GM13977 (cell line): ENCODE measurements at regions of chr2 and their contacts with region 1.

Region 1: GRCh38 chr2:134118279-134119116 is 135.4 kb upstream of the MGAT5 start:
- DNase-seq: peak; percentile 86
- CTCF ChIP-seq: peak; percentile 77

Region 2: GRCh38 chr2:133892352-133892913 is 226.1 kb before region 1 on chr2:
- in situ Hi-C with region 1: loop called (anchors 10 kb)
- DNase-seq: no peak
- CTCF ChIP-seq: no peak